Activated CD8-positive, alpha-beta T cell treated with anti-CD3 and anti-CD28 coated beads, Interleukin-2, amount 10 ng/mL, durations not matched to agents 7 days and 5 days (primary cell): ENCODE measurements at regions of chr11 and their contacts with region 1.

Region 1: DNA sequence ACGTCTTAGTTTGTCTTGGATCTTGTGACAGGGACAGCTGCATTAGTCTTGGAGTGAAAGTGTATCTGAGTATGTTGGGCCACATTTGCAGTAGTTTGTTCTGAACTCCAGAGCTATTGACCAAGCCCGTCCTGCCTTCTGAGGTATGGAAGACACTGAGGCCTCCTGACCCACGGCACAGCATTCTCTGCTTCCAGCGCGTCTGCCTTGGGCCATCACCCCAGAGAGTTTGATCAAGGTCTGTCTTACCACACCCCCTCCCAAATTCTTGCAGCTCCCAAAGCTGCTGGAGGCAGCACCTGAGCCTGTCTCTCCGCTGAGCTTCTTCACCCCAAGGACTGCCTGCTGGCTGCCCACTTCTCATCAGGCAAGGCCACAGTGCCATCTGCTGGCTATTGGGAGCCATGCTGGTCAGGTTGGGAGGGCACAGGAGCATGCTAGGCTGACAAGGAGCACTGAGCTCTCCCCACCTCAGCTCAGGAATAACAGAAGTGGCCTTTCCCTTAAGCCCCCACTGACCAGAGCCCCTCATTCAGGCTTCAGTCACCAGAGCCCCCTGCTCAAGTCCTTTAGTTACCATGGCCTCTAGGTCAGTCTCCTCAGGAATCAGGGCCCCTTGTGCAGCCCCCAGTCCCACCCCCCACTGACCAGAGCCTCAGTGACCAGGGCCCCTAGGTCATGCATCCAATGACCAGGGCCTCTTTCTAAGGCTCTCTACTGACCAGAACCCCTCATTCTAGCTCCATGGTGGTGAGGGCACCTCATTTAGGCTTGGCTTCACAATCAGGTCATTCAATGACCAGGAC is 27.2 kb upstream of the SMPD1 start:
- DNase-seq: peak; percentile 81
- ATAC-seq: peak; percentile 96
- H3K4me3 Mint-ChIP-seq: no peak overlapping the region
- H3K27ac Mint-ChIP-seq: no peak overlapping the region
- H3K4me1 Mint-ChIP-seq: no peaks in the 10 kb centered on the region
- H3K27me3 Mint-ChIP-seq: peaks cover 2% of the 10 kb centered on the region

Region 2: GRCh38 chr11:5891216-5891800 is 471.8 kb before region 1 on chr11:
- CTCF ChIA-PET with region 1: no interaction called
- POLR2A ChIA-PET with region 1: no interaction called
- DNase-seq: no peak
- ATAC-seq: no peak
- H3K4me3 Mint-ChIP-seq: no peak overlapping the region
- H3K27ac Mint-ChIP-seq: no peak overlapping the region
- H3K4me1 Mint-ChIP-seq: no peaks in the 10 kb centered on the region
- H3K27me3 Mint-ChIP-seq: no peaks in the 10 kb centered on the region

Region 3: GRCh38 chr11:6251120-6251733 is 111.8 kb before region 1 on chr11:
- CTCF ChIA-PET with region 1: interaction called, 32 read pairs
- POLR2A ChIA-PET with region 1: no interaction called
- DNase-seq: peak; percentile 68
- ATAC-seq: peak; percentile 77
- H3K4me3 Mint-ChIP-seq: no peak overlapping the region
- H3K27ac Mint-ChIP-seq: no peak overlapping the region
- H3K4me1 Mint-ChIP-seq: no peaks in the 10 kb centered on the region
- H3K27me3 Mint-ChIP-seq: peaks cover 4% of the 10 kb centered on the region

Region 4: DNA sequence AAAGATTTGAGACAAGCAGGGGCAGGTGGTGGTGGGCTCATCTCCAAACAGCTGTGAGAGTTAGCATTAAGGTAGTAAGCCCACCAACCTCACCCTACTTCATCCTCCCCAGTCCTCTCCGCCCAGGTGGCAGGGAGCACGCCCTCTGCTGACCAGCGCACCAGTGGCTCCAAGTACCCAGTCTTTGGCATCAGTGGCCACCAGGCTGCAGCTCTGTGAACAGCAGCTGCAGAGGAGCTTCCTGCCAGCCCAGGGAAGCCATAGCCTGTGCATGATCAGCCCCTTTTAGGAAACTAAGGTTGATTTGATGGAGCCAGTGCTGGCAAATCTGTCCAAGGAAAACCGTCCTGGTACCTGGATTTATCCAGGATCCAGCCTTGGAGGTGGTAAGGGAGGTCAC is 64.5 kb before region 1 on chr11:
- CTCF ChIA-PET with region 1: interaction called, 13 read pairs
- POLR2A ChIA-PET with region 1: no interaction called
- DNase-seq: peak; percentile 30
- ATAC-seq: no peak
- H3K4me3 Mint-ChIP-seq: no peak overlapping the region
- H3K27ac Mint-ChIP-seq: no peak overlapping the region
- H3K4me1 Mint-ChIP-seq: no peaks in the 10 kb centered on the region
- H3K27me3 Mint-ChIP-seq: peaks cover 16% of the 10 kb centered on the region

Region 5: GRCh38 chr11:6305297-6305696 is 57.8 kb before region 1 on chr11:
- CTCF ChIA-PET with region 1: interaction called, 10 read pairs
- POLR2A ChIA-PET with region 1: no interaction called
- DNase-seq: no peak
- ATAC-seq: no peak
- H3K4me3 Mint-ChIP-seq: no peak overlapping the region
- H3K27ac Mint-ChIP-seq: no peak overlapping the region
- H3K4me1 Mint-ChIP-seq: no peaks in the 10 kb centered on the region
- H3K27me3 Mint-ChIP-seq: peaks cover 44% of the 10 kb centered on the region

Region 6: GRCh38 chr11:6315811-6316425 is 47.2 kb before region 1 on chr11:
- CTCF ChIA-PET with region 1: interaction called, 28 read pairs
- POLR2A ChIA-PET with region 1: no interaction called
- DNase-seq: peak; percentile 48
- ATAC-seq: peak; percentile 52
- H3K4me3 Mint-ChIP-seq: no peak overlapping the region
- H3K27ac Mint-ChIP-seq: no peak overlapping the region
- H3K4me1 Mint-ChIP-seq: peaks cover 13% of the 10 kb centered on the region
- H3K27me3 Mint-ChIP-seq: peaks cover 37% of the 10 kb centered on the region

Region 7: GRCh38 chr11:6328321-6328720 is 34.8 kb before region 1 on chr11:
- CTCF ChIA-PET with region 1: interaction called, 28 read pairs
- POLR2A ChIA-PET with region 1: no interaction called
- DNase-seq: no peak
- ATAC-seq: no peak
- H3K4me3 Mint-ChIP-seq: no peak overlapping the region
- H3K27ac Mint-ChIP-seq: no peak overlapping the region
- H3K4me1 Mint-ChIP-seq: no peaks in the 10 kb centered on the region
- H3K27me3 Mint-ChIP-seq: peaks cover 21% of the 10 kb centered on the region

Region 8: DNA sequence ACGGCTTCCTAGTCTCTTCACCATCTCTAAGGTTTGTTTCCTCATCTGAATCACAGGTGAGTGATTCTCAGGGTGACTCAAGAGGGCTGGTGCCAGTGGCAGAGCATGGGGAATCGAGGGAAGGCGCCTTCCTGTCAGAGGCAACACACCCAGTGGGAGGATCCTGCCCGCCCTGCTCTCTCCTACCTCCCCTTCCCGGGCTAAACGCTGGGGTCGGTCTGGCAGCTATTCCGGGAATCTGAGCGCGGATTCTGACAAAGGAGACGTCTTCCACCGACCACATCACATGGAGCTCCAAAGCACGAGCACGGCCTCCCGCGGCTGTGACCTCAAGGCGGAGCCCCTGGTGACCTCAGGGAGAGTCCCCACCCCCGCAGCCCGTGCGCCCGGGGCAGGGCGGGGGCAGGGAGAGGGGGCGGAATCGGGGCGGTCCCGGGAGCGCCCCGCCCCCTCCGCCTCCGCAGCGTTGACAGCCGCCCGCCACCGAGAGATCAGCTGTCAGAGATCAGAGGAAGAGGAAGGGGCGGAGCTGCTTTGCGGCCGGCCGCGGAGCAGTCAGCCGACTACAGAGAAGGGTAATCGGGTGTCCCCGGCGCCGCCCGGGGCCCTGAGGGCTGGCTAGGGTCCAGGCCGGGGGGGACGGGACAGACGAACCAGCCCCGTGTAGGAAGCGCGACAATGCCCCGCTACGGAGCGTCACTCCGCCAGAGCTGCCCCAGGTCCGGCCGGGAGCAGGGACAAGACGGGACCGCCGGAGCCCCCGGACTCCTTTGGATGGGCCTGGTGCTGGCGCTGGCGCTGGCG is 27.0 kb after region 1 on chr11 and contains the start of gene SMPD1:
- CTCF ChIA-PET with region 1: interaction called, 11 read pairs
- POLR2A ChIA-PET with region 1: no interaction called
- DNase-seq: peak; percentile 95
- ATAC-seq: peak; percentile 92
- H3K4me3 Mint-ChIP-seq: peak within 1 kb of the TSS; percentile 89
- H3K27ac Mint-ChIP-seq: peak within 1 kb of the TSS; percentile 95
- H3K4me1 Mint-ChIP-seq: peaks cover 57% of the 10 kb centered on the region
- H3K27me3 Mint-ChIP-seq: peaks cover 2% of the 10 kb centered on the region
- total RNA-seq, gene SMPD1: 35.5 to 37.1 TPM

Region 9: GRCh38 chr11:6419009-6419631 is 56.0 kb after region 1 on chr11 and contains the start of gene APBB1:
- CTCF ChIA-PET with region 1: no interaction called
- POLR2A ChIA-PET with region 1: no interaction called
- DNase-seq: peak; percentile 72
- ATAC-seq: peak; percentile 73
- H3K4me3 Mint-ChIP-seq: peak within 1 kb of the TSS; percentile 75
- H3K27ac Mint-ChIP-seq: peak within 1 kb of the TSS; percentile 30
- H3K4me1 Mint-ChIP-seq: peaks cover 5% of the 10 kb centered on the region
- H3K27me3 Mint-ChIP-seq: peaks cover 25% of the 10 kb centered on the region
- total RNA-seq, gene APBB1: 51.7 to 52.4 TPM